Prostate gland (tissue), 2 donors: ENCODE measurements at regions of chr7 and their contacts with region 1.

Region 1: GRCh38 chr7:94657771-94658693 is 2.1 kb upstream of the SGCE start:
- DNase-seq: peak; percentile 94
- H3K4me3 ChIP-seq: peak overlapping the region; percentile 20 to 58
- H3K27ac ChIP-seq: peak overlapping the region in 1 of 2 donors; percentile 40
- H3K4me1 ChIP-seq: no peaks in the 10 kb centered on the region
- H3K27me3 ChIP-seq: no peaks in the 10 kb centered on the region
- CTCF ChIP-seq: peak in 2 of 4 experiments; percentile 15 to 20
- POLR2A ChIP-seq: peak; percentile 61

Region 2: GRCh38 chr7:94295850-94296249 is 362.2 kb before region 1 on chr7:
- intact Hi-C with region 1: loop called (anchors 5 kb)
- DNase-seq: no peak
- H3K4me3 ChIP-seq: no peak overlapping the region
- H3K27ac ChIP-seq: peak overlapping the region in 1 of 2 donors; percentile 2
- H3K4me1 ChIP-seq: no peaks in the 10 kb centered on the region
- H3K27me3 ChIP-seq: no peaks in the 10 kb centered on the region
- CTCF ChIP-seq: peak in 3 of 4 experiments; percentile 19 to 56 (median 34)
- POLR2A ChIP-seq: no peak

Region 3: DNA sequence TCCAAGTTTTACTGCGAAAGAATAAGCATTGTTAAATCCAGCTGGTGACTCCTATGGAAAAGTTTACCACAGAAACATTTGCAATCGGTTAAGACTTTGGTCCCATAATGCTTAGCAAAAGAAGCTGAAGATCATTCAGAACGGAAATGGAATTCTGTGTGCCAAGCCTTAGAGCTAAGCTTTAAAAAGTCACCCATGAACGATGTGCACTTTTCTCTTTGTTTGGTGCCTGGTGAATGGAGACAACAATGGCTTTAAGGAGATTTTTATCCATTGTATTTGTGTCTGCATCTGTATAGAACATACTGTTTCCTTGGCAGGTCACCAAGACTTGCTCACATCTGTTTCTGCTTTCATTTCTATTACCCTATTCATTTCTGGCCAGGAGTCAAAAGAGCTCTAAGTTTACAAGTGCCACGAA is 289.7 kb before region 1 on chr7:
- intact Hi-C with region 1: loop called (anchors 10 kb)
- DNase-seq: no peak
- H3K4me3 ChIP-seq: no peak overlapping the region
- H3K27ac ChIP-seq: peak overlapping the region; percentile 40 to 50
- H3K4me1 ChIP-seq: no peaks in the 10 kb centered on the region
- H3K27me3 ChIP-seq: no peaks in the 10 kb centered on the region
- CTCF ChIP-seq: no peak
- POLR2A ChIP-seq: no peak

Region 4: GRCh38 chr7:94449148-94449725 is 208.8 kb before region 1 on chr7:
- intact Hi-C with region 1: loop called (anchors 5 kb)
- DNase-seq: no peak
- H3K4me3 ChIP-seq: no peak overlapping the region
- H3K27ac ChIP-seq: no peak overlapping the region
- H3K4me1 ChIP-seq: no peaks in the 10 kb centered on the region
- H3K27me3 ChIP-seq: no peaks in the 10 kb centered on the region
- CTCF ChIP-seq: peak in 3 of 4 experiments; percentile 49 to 70 (median 63)
- POLR2A ChIP-seq: no peak

Region 5: GRCh38 chr7:94509879-94510581 is 148.0 kb before region 1 on chr7:
- intact Hi-C with region 1: loop called (anchors 5 kb)
- DNase-seq: peak; percentile 68
- H3K4me3 ChIP-seq: peak overlapping the region; percentile 64 to 86
- H3K27ac ChIP-seq: peak overlapping the region; percentile 96 to 98
- H3K4me1 ChIP-seq: peaks cover 5% of the 10 kb centered on the region
- H3K27me3 ChIP-seq: no peaks in the 10 kb centered on the region
- CTCF ChIP-seq: peak in 1 of 4 experiments; percentile 7
- POLR2A ChIP-seq: peak; percentile 61